GM12878 (cell line): ENCODE measurements at regions of chr11 and their contacts with region 1.

Region 1: GRCh38 chr11:1163911-1164735 is 6.4 kb downstream of the MUC5AC start:
- DNase-seq: no peak
- ATAC-seq: no peak
- H3K4me3 ChIP-seq: no peak overlapping the region
- H3K27ac ChIP-seq: no peak overlapping the region
- H3K4me1 ChIP-seq: no peaks in the 10 kb centered on the region
- H3K27me3 ChIP-seq: no peaks in the 10 kb centered on the region
- CTCF ChIP-seq: no peak
- EP300 ChIP-seq: no peak
- POLR2A ChIP-seq: no peak
- RAD21 ChIP-seq: no peak

Region 2: DNA sequence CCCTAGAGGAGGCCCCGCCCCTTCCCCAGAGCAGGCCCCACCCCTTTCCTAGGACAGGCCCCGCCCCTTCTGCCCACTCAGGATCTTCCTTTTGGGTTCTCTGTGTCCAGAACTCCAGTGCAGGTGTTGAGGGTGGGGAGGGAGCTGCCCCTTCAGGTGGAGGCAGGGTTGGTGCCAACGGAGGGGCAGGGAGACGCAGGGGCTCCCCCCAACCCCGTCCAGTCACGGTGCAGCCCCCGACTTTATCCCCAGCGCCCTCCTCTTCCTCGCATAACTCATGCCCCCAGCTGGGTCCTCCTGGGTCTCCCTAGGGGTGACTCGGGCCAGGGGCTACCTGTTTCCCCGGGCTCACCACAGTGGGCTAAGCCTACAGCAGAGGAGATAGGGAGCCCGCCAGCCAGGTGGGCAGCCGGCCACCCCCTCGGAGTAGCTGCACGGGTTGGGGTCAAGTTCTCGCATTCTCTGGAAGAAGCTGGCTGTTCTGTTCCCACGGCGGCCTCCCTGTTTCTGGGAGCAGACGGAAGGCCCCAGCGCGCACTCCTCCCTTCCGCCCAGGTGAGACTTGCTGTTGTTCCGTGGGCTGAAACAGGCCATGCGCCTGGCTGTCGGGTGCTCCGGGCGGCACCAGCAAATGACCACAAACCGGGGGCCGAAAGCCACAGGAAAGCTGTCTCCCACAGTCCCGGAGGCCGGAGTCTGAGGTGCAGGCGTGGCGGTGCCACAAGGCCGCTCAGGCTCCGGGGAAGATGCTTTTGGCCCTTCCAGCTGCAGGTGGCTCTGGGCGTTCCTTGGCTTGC is 50.5 kb before region 1 on chr11:
- CTCF ChIA-PET with region 1: no interaction called
- POLR2A ChIA-PET with region 1: no interaction called
- RAD21 ChIA-PET with region 1: no interaction called
- SMC1A ChIA-PET with region 1: no interaction called
- in situ Hi-C with region 1: no loop called
- intact Hi-C with region 1: no loop called
- DNase-seq: no peak
- ATAC-seq: no peak
- H3K4me3 ChIP-seq: no peak overlapping the region
- H3K27ac ChIP-seq: no peak overlapping the region
- H3K4me1 ChIP-seq: no peaks in the 10 kb centered on the region
- H3K27me3 ChIP-seq: no peaks in the 10 kb centered on the region
- CTCF ChIP-seq: no peak
- EP300 ChIP-seq: no peak
- POLR2A ChIP-seq: no peak
- RAD21 ChIP-seq: no peak

Region 3: GRCh38 chr11:1193326-1194230 is 29.5 kb after region 1 on chr11:
- CTCF ChIA-PET with region 1: no interaction called
- POLR2A ChIA-PET with region 1: no interaction called
- RAD21 ChIA-PET with region 1: no interaction called
- SMC1A ChIA-PET with region 1: no interaction called
- in situ Hi-C with region 1: no loop called
- intact Hi-C with region 1: no loop called
- DNase-seq: no peak
- ATAC-seq: no peak
- H3K4me3 ChIP-seq: no peak overlapping the region
- H3K27ac ChIP-seq: no peak overlapping the region
- H3K4me1 ChIP-seq: no peaks in the 10 kb centered on the region
- H3K27me3 ChIP-seq: no peaks in the 10 kb centered on the region
- CTCF ChIP-seq: no peak
- EP300 ChIP-seq: no peak
- POLR2A ChIP-seq: no peak
- RAD21 ChIP-seq: no peak

Region 4: DNA sequence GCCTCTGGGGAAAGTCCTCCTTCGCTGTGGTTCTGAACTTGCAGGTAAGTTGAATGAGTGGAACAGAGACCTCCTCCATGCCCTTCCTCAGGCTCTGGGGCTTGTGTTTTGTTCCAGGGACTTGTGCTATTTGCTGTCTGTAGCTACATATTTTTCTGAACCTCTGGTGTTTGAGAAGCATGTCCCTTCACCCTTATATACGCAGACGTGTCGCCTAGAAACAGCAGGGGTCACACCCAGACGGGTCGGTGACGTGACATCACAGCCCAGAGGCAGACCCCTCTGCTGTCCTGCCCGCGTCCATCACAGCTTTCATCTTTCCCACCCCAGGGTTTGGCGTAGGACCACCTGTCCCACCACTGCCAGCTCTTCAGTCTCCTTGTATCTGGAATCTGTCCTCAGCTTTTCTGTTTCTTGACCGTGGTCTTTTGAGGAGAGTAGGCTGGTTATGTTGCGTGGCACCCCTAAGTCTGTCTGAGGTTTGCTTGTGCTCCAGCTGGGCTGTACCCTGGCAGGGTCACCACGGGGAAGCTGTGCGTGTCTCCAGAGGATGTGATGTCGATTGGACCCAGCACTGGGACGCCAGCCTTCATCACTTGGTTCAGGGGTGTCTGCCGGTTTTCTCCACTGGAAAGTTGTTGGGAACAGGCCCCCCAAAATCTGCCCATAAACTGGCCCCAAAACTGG is 45.4 kb after region 1 on chr11:
- CTCF ChIA-PET with region 1: no interaction called
- POLR2A ChIA-PET with region 1: no interaction called
- RAD21 ChIA-PET with region 1: no interaction called
- SMC1A ChIA-PET with region 1: no interaction called
- in situ Hi-C with region 1: loop called (anchors 5 kb)
- intact Hi-C with region 1: no loop called
- DNase-seq: no peak
- ATAC-seq: no peak
- H3K4me3 ChIP-seq: no peak overlapping the region
- H3K27ac ChIP-seq: no peak overlapping the region
- H3K4me1 ChIP-seq: no peaks in the 10 kb centered on the region
- H3K27me3 ChIP-seq: no peaks in the 10 kb centered on the region
- CTCF ChIP-seq: no peak
- EP300 ChIP-seq: no peak
- POLR2A ChIP-seq: no peak
- RAD21 ChIP-seq: no peak